T-cell (primary cell): ENCODE measurements at regions of chr3 and their contacts with region 1.

Region 1: GRCh38 chr3:67113802-67114407 is 115.8 kb downstream of the KBTBD8 start:
- DNase-seq: peak; percentile 17 to 81 (median 64)
- ATAC-seq: peak; percentile 69 to 81 (median 77)
- H3K4me3 ChIP-seq: no peak overlapping the region
- H3K4me3 Mint-ChIP-seq: no peak overlapping the region
- H3K27ac ChIP-seq: no peak overlapping the region
- H3K27ac Mint-ChIP-seq: no peak overlapping the region
- H3K4me1 ChIP-seq: no peaks in the 10 kb centered on the region
- H3K4me1 Mint-ChIP-seq: no peaks in the 10 kb centered on the region
- H3K27me3 ChIP-seq: no peaks in the 10 kb centered on the region
- H3K27me3 Mint-ChIP-seq: peaks cover 28% of the 10 kb centered on the region in 2 donors

Region 2: DNA sequence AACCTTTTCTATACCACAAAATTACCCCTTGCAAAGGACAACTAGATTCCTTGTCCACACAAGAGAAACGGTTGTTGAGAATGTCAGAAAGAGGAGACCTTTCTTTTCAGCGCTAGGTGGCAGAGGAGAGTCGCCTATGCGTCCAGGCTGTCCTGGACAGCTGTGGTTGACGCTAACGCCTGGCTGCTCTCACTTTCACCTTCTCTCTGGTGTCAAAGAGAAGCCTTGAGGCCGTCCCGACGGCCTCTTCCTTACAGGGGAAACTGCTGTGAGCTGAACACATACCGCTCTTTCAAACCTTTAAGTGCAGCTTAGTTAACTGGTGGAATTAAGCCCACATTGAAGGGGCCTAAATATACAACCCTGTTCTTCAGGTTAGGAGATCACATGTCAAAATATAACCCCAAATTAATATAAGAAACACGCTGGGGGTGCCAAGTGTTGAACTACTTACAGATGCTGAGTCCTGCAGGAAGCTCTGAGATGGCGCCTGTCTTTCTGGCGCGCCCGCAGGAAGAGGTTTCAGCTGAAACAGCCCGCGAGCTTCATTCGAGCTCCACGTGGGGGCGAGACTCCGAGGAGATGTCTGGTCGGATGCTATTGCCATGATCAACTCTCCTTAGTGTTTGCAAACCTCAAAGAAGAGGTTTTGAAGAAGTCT is 141.9 kb before region 1 on chr3:
- CTCF ChIA-PET with region 1: interaction called, 6 to 25 read pairs
- POLR2A ChIA-PET with region 1: no interaction called
- DNase-seq: peak; percentile 21 to 75 (median 49)
- ATAC-seq: peak; percentile 89 to 95 (median 92)
- H3K4me3 ChIP-seq: peak overlapping the region; percentile 50 to 71
- H3K4me3 Mint-ChIP-seq: peak overlapping the region; percentile 78 to 90 (median 82)
- H3K27ac ChIP-seq: peak overlapping the region; percentile 43
- H3K27ac Mint-ChIP-seq: peak overlapping the region; percentile 60 to 85
- H3K4me1 ChIP-seq: peaks cover 2 to 7% of the 10 kb centered on the region in 2 experiments
- H3K4me1 Mint-ChIP-seq: peaks cover 11 to 14% (median 12%) of the 10 kb centered on the region in 3 donors
- H3K27me3 ChIP-seq: no peaks in the 10 kb centered on the region
- H3K27me3 Mint-ChIP-seq: peaks cover 0 to 3% of the 10 kb centered on the region in 2 donors

Region 3: GRCh38 chr3:66998113-66998903 is 115.6 kb before region 1 on chr3 and contains the start of gene KBTBD8:
- CTCF ChIA-PET with region 1: interaction called, 4 to 14 read pairs
- POLR2A ChIA-PET with region 1: no interaction called
- DNase-seq: peak; percentile 22 to 98 (median 95)
- ATAC-seq: peak; percentile 95 to 98 (median 97)
- H3K4me3 ChIP-seq: peak within 1 kb of the TSS; percentile 69 to 70
- H3K4me3 Mint-ChIP-seq: peak within 1 kb of the TSS; percentile 90 to 95 (median 93)
- H3K27ac ChIP-seq: peak within 1 kb of the TSS; percentile 47
- H3K27ac Mint-ChIP-seq: peak within 1 kb of the TSS; percentile 89 to 95
- H3K4me1 ChIP-seq: peaks cover 6 to 14% of the 10 kb centered on the region in 2 experiments
- H3K4me1 Mint-ChIP-seq: peaks cover 22 to 37% (median 35%) of the 10 kb centered on the region in 3 donors
- H3K27me3 ChIP-seq: no peaks in the 10 kb centered on the region
- H3K27me3 Mint-ChIP-seq: peaks cover 14 to 22% of the 10 kb centered on the region in 2 donors
- total RNA-seq, gene KBTBD8: 3.3 to 11.5 (median 6.1) TPM

Region 4: DNA sequence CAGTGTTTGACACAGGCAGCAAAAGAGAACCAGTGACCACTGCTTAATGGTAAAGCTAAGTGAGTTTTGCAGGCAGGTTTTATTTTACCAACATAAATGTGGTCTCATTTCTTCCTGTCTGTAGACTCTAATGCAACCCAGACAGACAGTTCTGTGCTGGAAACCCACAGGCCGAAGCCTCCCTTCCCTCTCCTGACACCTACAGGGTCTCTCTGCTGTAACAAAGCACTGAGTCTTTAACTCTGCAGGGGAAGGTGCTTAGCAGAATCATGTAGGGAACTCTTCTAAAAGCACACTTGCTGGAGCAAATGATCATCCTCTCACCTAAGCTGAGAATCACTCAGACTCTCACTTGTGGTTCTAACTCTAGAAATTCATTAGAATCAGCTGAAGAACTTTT is 84.5 kb after region 1 on chr3:
- CTCF ChIA-PET with region 1: no interaction called
- POLR2A ChIA-PET with region 1: no interaction called
- DNase-seq: no peak
- ATAC-seq: no peak
- H3K4me3 ChIP-seq: no peak overlapping the region
- H3K4me3 Mint-ChIP-seq: no peak overlapping the region
- H3K27ac ChIP-seq: no peak overlapping the region
- H3K27ac Mint-ChIP-seq: no peak overlapping the region
- H3K4me1 ChIP-seq: no peaks in the 10 kb centered on the region
- H3K4me1 Mint-ChIP-seq: no peaks in the 10 kb centered on the region
- H3K27me3 ChIP-seq: no peaks in the 10 kb centered on the region
- H3K27me3 Mint-ChIP-seq: no peaks in the 10 kb centered on the region

Region 5: GRCh38 chr3:67790043-67790442 is 676.1 kb after region 1 on chr3:
- CTCF ChIA-PET with region 1: interaction called, 5 to 24 read pairs
- POLR2A ChIA-PET with region 1: no interaction called
- DNase-seq: peak in 34 of 35 experiments; percentile 13 to 77 (median 54)
- ATAC-seq: peak; percentile 76 to 93 (median 82)
- H3K4me3 ChIP-seq: no peak overlapping the region
- H3K4me3 Mint-ChIP-seq: no peak overlapping the region
- H3K27ac ChIP-seq: no peak overlapping the region
- H3K27ac Mint-ChIP-seq: peak overlapping the region in 1 of 2 donors; percentile 4
- H3K4me1 ChIP-seq: peaks cover 0 to 5% of the 10 kb centered on the region in 2 experiments
- H3K4me1 Mint-ChIP-seq: peaks cover 10 to 14% (median 14%) of the 10 kb centered on the region in 3 donors
- H3K27me3 ChIP-seq: no peaks in the 10 kb centered on the region
- H3K27me3 Mint-ChIP-seq: no peaks in the 10 kb centered on the region

Region 6: GRCh38 chr3:67821135-67821534 is 707.2 kb after region 1 on chr3:
- CTCF ChIA-PET with region 1: interaction called, 3 to 12 read pairs
- POLR2A ChIA-PET with region 1: no interaction called
- DNase-seq: no peak
- ATAC-seq: no peak
- H3K4me3 ChIP-seq: no peak overlapping the region
- H3K4me3 Mint-ChIP-seq: no peak overlapping the region
- H3K27ac ChIP-seq: no peak overlapping the region
- H3K27ac Mint-ChIP-seq: no peak overlapping the region
- H3K4me1 ChIP-seq: no peaks in the 10 kb centered on the region
- H3K4me1 Mint-ChIP-seq: peaks cover 0 to 1% (median 0%) of the 10 kb centered on the region in 3 donors
- H3K27me3 ChIP-seq: no peaks in the 10 kb centered on the region
- H3K27me3 Mint-ChIP-seq: no peaks in the 10 kb centered on the region

Region 7: DNA sequence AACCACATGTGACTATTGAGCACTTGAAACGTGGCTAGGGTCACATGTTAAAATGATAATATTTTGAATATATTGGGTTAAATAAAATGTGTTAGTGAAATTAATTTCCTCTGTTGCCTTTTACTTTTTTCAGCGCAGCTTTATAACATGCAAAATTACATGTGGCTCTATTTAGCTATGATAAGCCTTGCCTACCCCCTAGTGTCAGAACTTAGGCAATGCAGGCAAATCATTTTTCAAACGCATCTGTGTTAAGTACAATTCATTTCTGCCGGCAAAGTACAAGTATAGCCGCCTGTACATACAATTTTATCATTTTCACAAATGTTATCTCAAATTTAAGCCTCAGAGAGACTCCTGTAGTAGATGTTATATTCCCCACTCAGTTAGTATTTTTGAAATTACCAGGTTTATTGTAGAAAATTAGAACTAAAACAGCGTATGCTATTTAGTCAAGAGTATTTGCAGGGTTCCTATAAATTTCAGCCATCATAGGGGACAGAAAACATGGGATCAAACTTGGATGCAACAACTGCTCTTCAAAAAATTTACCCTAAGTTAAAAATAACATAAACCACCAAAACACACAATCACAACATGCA is 1762.3 kb after region 1 on chr3:
- CTCF ChIA-PET with region 1: interaction called, 33 to 94 read pairs
- POLR2A ChIA-PET with region 1: no interaction called
- DNase-seq: peak in 21 of 35 experiments; percentile 2 to 71 (median 10)
- ATAC-seq: peak in 3 of 4 experiments; percentile 52 to 62 (median 53)
- H3K4me3 ChIP-seq: no peak overlapping the region
- H3K4me3 Mint-ChIP-seq: no peak overlapping the region
- H3K27ac ChIP-seq: no peak overlapping the region
- H3K27ac Mint-ChIP-seq: no peak overlapping the region
- H3K4me1 ChIP-seq: no peaks in the 10 kb centered on the region
- H3K4me1 Mint-ChIP-seq: no peaks in the 10 kb centered on the region
- H3K27me3 ChIP-seq: peaks cover 0 to 3% of the 10 kb centered on the region in 2 experiments
- H3K27me3 Mint-ChIP-seq: peaks cover 12 to 36% of the 10 kb centered on the region in 2 donors

Region 8: GRCh38 chr3:68893600-68894239 is 1779.8 kb after region 1 on chr3:
- CTCF ChIA-PET with region 1: interaction called, 9 to 25 read pairs
- POLR2A ChIA-PET with region 1: no interaction called
- DNase-seq: peak in 2 of 35 experiments; percentile 1 to 65
- ATAC-seq: no peak
- H3K4me3 ChIP-seq: no peak overlapping the region
- H3K4me3 Mint-ChIP-seq: no peak overlapping the region
- H3K27ac ChIP-seq: no peak overlapping the region
- H3K27ac Mint-ChIP-seq: no peak overlapping the region
- H3K4me1 ChIP-seq: no peaks in the 10 kb centered on the region
- H3K4me1 Mint-ChIP-seq: no peaks in the 10 kb centered on the region
- H3K27me3 ChIP-seq: peaks cover 0 to 7% of the 10 kb centered on the region in 2 experiments
- H3K27me3 Mint-ChIP-seq: peaks cover 10 to 11% of the 10 kb centered on the region in 2 donors